ENCODE measurements at regions of chr14 and their contacts with region 1.

Region 1: GRCh38 chr14:104826189-104826860 is 25.4 kb downstream of the ZBTB42 start:
- DNase-seq: peak; percentile 87
- H3K4me3 Mint-ChIP-seq: peak overlapping the region; percentile 81
- H3K27ac Mint-ChIP-seq: no peak overlapping the region
- H3K4me1 Mint-ChIP-seq: peaks cover 11% of the 10 kb centered on the region
- H3K27me3 Mint-ChIP-seq: peaks cover 29% of the 10 kb centered on the region

Region 2: GRCh38 chr14:104768437-104769323 is 57.6 kb before region 1 on chr14:
- intact Hi-C with region 1: loop called (anchors 1 kb)
- DNase-seq: peak; percentile 84
- H3K4me3 Mint-ChIP-seq: no peak overlapping the region
- H3K27ac Mint-ChIP-seq: no peak overlapping the region
- H3K4me1 Mint-ChIP-seq: peaks cover 4% of the 10 kb centered on the region
- H3K27me3 Mint-ChIP-seq: no peaks in the 10 kb centered on the region

Region 3: DNA sequence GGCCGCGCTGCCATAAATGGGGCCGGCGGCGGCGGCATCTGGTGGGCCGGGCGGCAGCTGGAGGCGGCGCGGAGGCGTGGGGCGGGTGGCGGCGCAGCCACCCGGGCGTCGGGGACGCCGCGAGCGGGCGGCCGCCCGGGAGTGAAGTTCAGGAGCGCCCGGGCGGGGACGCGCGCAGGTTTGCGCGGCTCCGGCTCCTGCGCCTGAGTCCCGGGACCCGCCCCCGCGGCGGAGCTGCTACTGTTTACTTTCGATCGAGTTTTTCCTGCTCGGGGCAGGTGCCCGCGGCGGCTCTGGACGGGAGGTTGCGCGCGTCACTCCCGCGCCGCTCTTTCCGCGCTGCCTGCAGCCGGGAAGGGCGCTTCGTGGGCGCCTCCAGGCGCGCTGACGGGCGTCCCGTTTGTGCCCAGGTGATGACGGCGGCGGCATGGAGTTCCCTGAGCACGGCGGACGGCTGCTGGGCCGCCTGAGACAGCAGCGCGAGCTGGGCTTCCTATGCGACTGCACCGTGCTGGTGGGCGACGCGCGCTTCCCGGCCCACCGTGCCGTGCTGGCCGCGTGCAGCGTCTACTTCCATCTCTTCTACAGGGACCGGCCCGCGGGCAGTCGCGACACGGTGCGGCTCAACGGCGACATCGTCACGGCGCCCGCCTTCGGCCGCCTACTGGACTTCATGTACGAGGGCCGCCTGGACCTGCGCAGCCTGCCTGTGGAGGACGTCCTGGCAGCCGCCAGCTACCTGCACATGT is 25.4 kb before region 1 on chr14 and contains the start of gene ZBTB42:
- intact Hi-C with region 1: loop called (anchors 1 kb)
- DNase-seq: peak; percentile 77
- H3K4me3 Mint-ChIP-seq: peak within 1 kb of the TSS; percentile 86
- H3K27ac Mint-ChIP-seq: peak within 1 kb of the TSS; percentile 52
- H3K4me1 Mint-ChIP-seq: peaks cover 13% of the 10 kb centered on the region
- H3K27me3 Mint-ChIP-seq: peaks cover 2% of the 10 kb centered on the region
- total RNA-seq, gene ZBTB42: 5.2 and 5.4 TPM in 2 replicates

Region 4: GRCh38 chr14:104908303-104908702 is 82.0 kb after region 1 on chr14:
- intact Hi-C with region 1: no loop called
- DNase-seq: no peak
- H3K4me3 Mint-ChIP-seq: no peak overlapping the region
- H3K27ac Mint-ChIP-seq: no peak overlapping the region
- H3K4me1 Mint-ChIP-seq: no peaks in the 10 kb centered on the region
- H3K27me3 Mint-ChIP-seq: peaks cover 17% of the 10 kb centered on the region